ENCODE measurements at regions of chr10 and their contacts with region 1.

Region 1: DNA sequence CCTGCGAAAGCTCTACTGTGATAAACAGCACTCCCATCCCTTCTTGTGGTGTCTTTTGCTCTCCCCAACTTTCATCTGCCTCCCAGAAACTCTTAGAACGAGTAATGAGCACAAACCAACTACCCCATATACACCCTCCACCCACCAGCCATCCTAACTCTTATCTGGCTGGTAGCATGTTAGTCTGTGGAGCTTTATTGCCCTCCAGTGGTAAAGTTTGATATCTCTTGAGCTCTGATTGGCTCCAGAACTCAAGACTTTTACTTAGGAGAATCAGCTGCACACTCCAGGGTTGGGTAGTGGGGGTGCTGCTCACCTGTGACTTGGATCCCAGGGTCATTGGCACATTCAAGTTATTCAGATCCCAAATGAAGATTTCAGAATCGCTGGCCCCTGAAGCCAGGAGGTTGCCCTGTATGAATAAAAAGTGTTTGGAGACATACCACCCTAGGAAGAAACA is 10.9 kb downstream of the SEC31B start:
- DNase-seq: peak; percentile 70
- H3K4me3 Mint-ChIP-seq: peak overlapping the region; percentile 79
- H3K27ac Mint-ChIP-seq: peak overlapping the region; percentile 92
- H3K4me1 Mint-ChIP-seq: peaks cover 96% of the 10 kb centered on the region
- H3K27me3 Mint-ChIP-seq: no peaks in the 10 kb centered on the region

Region 2: GRCh38 chr10:100338434-100339036 is 170.2 kb before region 1 on chr10:
- CTCF ChIA-PET with region 1: interaction called, 43 read pairs
- DNase-seq: peak; percentile 89
- H3K4me3 Mint-ChIP-seq: no peak overlapping the region
- H3K27ac Mint-ChIP-seq: peak overlapping the region; percentile 71
- H3K4me1 Mint-ChIP-seq: peaks cover 22% of the 10 kb centered on the region
- H3K27me3 Mint-ChIP-seq: peaks cover 38% of the 10 kb centered on the region

Region 3: GRCh38 chr10:100419911-100420449 is 88.7 kb before region 1 on chr10:
- CTCF ChIA-PET with region 1: no interaction called
- DNase-seq: no peak
- H3K4me3 Mint-ChIP-seq: no peak overlapping the region
- H3K27ac Mint-ChIP-seq: no peak overlapping the region
- H3K4me1 Mint-ChIP-seq: no peaks in the 10 kb centered on the region
- H3K27me3 Mint-ChIP-seq: peaks cover 33% of the 10 kb centered on the region

Region 4: DNA sequence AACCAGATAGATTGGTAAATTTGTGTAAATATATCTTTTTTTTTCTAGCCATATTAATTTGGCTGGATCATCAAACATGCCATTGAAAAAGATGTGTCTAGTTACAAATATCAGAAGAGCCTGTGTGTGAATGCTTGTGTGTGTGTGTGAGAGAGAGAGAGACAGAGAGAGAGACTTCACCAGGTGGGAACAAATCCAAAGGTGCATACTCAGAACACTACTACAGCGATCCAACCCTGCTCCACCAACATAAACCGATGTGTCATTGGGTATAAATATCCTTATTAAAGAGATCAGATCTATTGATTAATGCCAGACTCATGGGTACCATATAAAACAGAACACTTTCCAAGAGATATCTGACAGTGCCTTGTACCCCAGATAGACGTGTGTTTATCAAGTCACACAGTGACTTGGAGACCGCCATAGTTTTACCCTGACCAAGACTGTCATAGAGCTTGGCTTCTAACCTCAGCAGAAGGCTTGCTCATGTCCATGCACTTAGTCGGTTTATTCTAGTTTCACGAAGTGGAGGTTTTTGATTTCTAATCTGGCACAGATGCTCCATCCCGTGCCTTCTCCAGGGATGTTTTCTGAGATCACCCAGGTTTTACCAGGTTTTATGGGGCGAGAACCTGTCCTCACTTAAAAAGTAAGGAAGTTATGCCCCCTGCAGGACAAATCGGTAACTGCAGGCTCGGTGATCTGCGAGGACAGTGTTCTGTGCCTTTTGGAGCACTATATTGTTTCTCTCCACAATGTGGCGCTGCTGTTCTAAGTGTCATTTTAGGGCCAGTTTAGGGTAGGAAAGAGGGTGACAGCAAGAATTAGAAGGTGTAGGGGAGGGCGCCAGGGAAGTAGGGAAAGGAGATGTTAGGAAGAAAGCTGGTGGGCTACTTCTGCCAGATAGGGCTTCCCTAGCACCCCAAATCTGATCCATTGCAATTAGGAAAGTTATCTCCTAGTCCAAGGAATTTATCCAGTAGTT is 75.2 kb before region 1 on chr10:
- CTCF ChIA-PET with region 1: interaction called, 104 read pairs
- DNase-seq: peak; percentile 98
- H3K4me3 Mint-ChIP-seq: no peak overlapping the region
- H3K27ac Mint-ChIP-seq: no peak overlapping the region
- H3K4me1 Mint-ChIP-seq: peaks cover 9% of the 10 kb centered on the region
- H3K27me3 Mint-ChIP-seq: no peaks in the 10 kb centered on the region

Region 5: GRCh38 chr10:100518761-100519241 is 10.1 kb after region 1 on chr10:
- CTCF ChIA-PET with region 1: interaction called, 108 read pairs
- DNase-seq: peak; percentile 81
- H3K4me3 Mint-ChIP-seq: no peak overlapping the region
- H3K27ac Mint-ChIP-seq: no peak overlapping the region
- H3K4me1 Mint-ChIP-seq: peaks cover 41% of the 10 kb centered on the region
- H3K27me3 Mint-ChIP-seq: no peaks in the 10 kb centered on the region

Region 6: GRCh38 chr10:100529475-100530298 is 21.0 kb after region 1 on chr10 and contains the start of gene NDUFB8:
- CTCF ChIA-PET with region 1: interaction called, 13 read pairs
- DNase-seq: peak; percentile 90
- H3K4me3 Mint-ChIP-seq: peak within 1 kb of the TSS; percentile 82
- H3K27ac Mint-ChIP-seq: peak within 1 kb of the TSS; percentile 93
- H3K4me1 Mint-ChIP-seq: peaks cover 48% of the 10 kb centered on the region
- H3K27me3 Mint-ChIP-seq: no peaks in the 10 kb centered on the region

Measured in activated naive CD4-positive, alpha-beta T cell treated with anti-CD3 and anti-CD28 coated beads, Interleukin-2, amount 10 ng/mL, durations not matched to agents 7 days and 5 days (primary cell).